ENCODE measurements at regions of chr5 and their contacts with region 1.

Region 1: GRCh38 chr5:165805756-165806155 is 2300.3 kb downstream of the MAT2B start:
- DNase-seq: no peak
- ATAC-seq: no peak

Region 2: GRCh38 chr5:167049043-167049663 is 1243.4 kb after region 1 on chr5:
- intact Hi-C with region 1: loop called (anchors 5 kb)
- DNase-seq: no peak
- ATAC-seq: peak; percentile 68

Measured in sciatic nerve (tissue), 2 donors.